K562 (cell line): ENCODE measurements at regions of chr9 and their contacts with region 1.

Region 1: DNA sequence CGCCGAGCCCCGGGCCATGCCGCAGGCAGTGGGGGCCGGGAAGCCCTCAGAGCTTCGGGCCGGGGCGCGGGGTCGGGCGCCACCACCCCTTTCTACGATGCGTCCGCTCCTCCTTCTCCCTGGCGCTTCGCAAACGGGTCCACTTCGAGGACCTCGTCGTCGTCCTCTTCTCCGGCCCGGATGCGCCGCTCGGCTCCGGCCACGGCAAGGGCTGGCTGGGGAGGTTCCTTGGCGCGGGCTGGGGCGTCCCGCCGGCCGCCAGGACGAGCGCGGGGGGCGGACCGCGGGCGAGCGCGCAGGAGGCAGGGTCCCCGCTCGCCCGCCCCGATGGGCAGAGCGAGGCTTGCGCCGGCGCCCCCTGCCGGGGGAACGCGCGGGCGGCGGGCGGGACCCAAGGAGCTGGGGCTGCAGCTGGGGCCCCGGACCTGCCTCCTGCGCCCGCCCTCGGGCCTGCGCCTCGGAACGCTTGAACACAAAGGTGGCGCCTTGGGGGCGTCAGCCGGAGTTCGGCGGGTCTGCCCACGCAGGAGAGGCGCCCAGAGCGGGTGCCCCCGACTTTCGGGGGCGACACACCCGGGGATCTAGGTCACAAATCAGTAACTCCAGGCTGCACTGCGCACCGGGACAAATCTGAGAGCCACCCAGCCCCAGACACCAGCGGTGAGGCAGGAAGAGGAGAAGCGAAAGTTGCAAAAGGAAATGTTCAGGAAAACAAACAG is at the start of gene ROR2:
- DNase-seq: peak; percentile 88 to 91 (median 90)
- ATAC-seq: peak; percentile 77
- H3K4me3 ChIP-seq: peak within 1 kb of the TSS; percentile 80
- H3K27ac ChIP-seq: peak within 1 kb of the TSS; percentile 79
- H3K4me1 ChIP-seq: peaks cover 16 to 28% of the 10 kb centered on the region in 2 experiments; a peak in 4 of 5 replicates
- H3K27me3 ChIP-seq: no peaks in the 10 kb centered on the region
- CTCF ChIP-seq: peak; percentile 54 to 84 (median 78)
- EP300 ChIP-seq: no peak
- POLR2A ChIP-seq: peak; percentile 47; the same call in 1 of the 2 replicates
- RAD21 ChIP-seq: peak; percentile 72 to 87
- polyA plus RNA-seq, gene ROR2: 5.6 to 6.0 TPM

Region 2: GRCh38 chr9:91775011-91775707 is 174.9 kb before region 1 on chr9:
- CTCF ChIA-PET with region 1: interaction called, 16 read pairs
- POLR2A ChIA-PET with region 1: interaction called, 6 read pairs
- in situ Hi-C with region 1: no loop called
- intact Hi-C with region 1: loop called (anchors 1 kb)
- DNase-seq: peak; percentile 74 to 79 (median 77)
- ATAC-seq: peak; percentile 91
- H3K4me3 ChIP-seq: no peak overlapping the region
- H3K27ac ChIP-seq: no peak overlapping the region
- H3K4me1 ChIP-seq: peaks cover 5 to 6% of the 10 kb centered on the region in 2 experiments; a peak in 4 of 5 replicates
- H3K27me3 ChIP-seq: no peaks in the 10 kb centered on the region
- CTCF ChIP-seq: peak; percentile 76 to 87 (median 81)
- EP300 ChIP-seq: no peak
- POLR2A ChIP-seq: no peak
- RAD21 ChIP-seq: peak; percentile 86 to 90

Region 3: GRCh38 chr9:91900055-91900796 is 49.9 kb before region 1 on chr9:
- CTCF ChIA-PET with region 1: no interaction called
- POLR2A ChIA-PET with region 1: interaction called, 6 read pairs
- in situ Hi-C with region 1: no loop called
- intact Hi-C with region 1: loop called (anchors 2 kb)
- DNase-seq: peak; percentile 78 to 92 (median 86)
- ATAC-seq: peak; percentile 79
- H3K4me3 ChIP-seq: no peak overlapping the region; the same call in 1 of the 2 replicates
- H3K27ac ChIP-seq: peak overlapping the region; percentile 88
- H3K4me1 ChIP-seq: peaks cover 79 to 90% of the 10 kb centered on the region in 2 experiments
- H3K27me3 ChIP-seq: no peaks in the 10 kb centered on the region
- CTCF ChIP-seq: peak in 1 of 3 experiments; percentile 4; a peak in 1 of 6 replicates
- EP300 ChIP-seq: peak; percentile 91
- POLR2A ChIP-seq: peak; percentile 63
- RAD21 ChIP-seq: peak in 1 of 2 experiments; percentile 37; a peak in 3 of 4 replicates

Region 4: DNA sequence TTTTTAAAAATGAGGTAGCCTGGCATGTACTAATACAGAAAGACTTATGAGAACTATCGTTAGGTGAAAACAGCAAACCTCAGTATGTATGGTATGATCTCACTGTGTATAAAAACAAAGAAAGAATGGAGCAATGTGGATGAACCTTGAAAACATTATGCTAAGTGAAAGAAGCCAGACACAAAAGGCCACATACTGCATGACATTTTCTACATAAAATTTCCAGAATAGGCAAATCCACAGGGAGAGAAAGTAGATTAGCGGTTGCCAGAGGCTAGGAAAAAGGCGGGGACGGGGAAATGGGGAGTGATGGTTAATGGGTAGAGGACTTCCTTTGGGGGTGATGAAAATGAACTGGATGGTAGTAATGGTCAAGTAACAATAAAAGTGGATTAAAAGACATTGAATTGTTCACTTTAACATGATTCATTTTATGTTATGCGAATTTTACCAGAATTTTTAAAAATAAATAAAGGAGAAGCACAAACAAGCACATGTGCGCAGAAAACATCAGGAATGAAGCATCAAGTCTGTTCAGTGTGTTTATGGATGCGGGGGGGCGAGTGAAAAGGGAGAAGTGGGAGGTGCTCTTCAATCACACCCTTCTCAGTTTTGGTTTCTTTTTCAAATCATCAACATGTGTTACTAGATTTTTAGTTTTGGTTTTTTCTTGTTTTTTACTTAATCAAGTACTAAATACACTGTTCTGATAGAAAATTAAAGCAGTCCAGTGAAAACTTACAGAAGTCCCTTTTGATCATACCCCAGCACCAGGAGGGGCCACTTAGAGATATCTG is 16.4 kb before region 1 on chr9:
- CTCF ChIA-PET with region 1: no interaction called
- POLR2A ChIA-PET with region 1: interaction called, 27 read pairs
- in situ Hi-C with region 1: no loop called
- intact Hi-C with region 1: no loop called
- DNase-seq: peak in 1 of 4 experiments; percentile 48
- ATAC-seq: peak; percentile 75
- H3K4me3 ChIP-seq: no peak overlapping the region
- H3K27ac ChIP-seq: peak overlapping the region; percentile 29; the same call in 1 of the 3 replicates
- H3K4me1 ChIP-seq: peaks cover 10 to 13% of the 10 kb centered on the region in 2 experiments; a peak in 4 of 5 replicates
- H3K27me3 ChIP-seq: no peaks in the 10 kb centered on the region
- CTCF ChIP-seq: no peak
- EP300 ChIP-seq: no peak
- POLR2A ChIP-seq: no peak
- RAD21 ChIP-seq: no peak

Region 5: GRCh38 chr9:92029553-92029952 is 79.4 kb after region 1 on chr9:
- CTCF ChIA-PET with region 1: no interaction called
- POLR2A ChIA-PET with region 1: no interaction called
- in situ Hi-C with region 1: no loop called
- intact Hi-C with region 1: no loop called
- DNase-seq: no peak
- ATAC-seq: peak; percentile 35; the same call in 1 of the 3 replicates
- H3K4me3 ChIP-seq: no peak overlapping the region
- H3K27ac ChIP-seq: no peak overlapping the region
- H3K4me1 ChIP-seq: no peaks in the 10 kb centered on the region
- H3K27me3 ChIP-seq: no peaks in the 10 kb centered on the region
- CTCF ChIP-seq: peak in 2 of 3 experiments; percentile 22 to 42; a peak in 2 of 6 replicates
- EP300 ChIP-seq: no peak
- POLR2A ChIP-seq: no peak
- RAD21 ChIP-seq: peak in 1 of 2 experiments; percentile 19; a peak in 1 of 4 replicates